Ovary (tissue), 10 donors: ENCODE measurements at regions of chr1 and their contacts with region 1.

Region 1: DNA sequence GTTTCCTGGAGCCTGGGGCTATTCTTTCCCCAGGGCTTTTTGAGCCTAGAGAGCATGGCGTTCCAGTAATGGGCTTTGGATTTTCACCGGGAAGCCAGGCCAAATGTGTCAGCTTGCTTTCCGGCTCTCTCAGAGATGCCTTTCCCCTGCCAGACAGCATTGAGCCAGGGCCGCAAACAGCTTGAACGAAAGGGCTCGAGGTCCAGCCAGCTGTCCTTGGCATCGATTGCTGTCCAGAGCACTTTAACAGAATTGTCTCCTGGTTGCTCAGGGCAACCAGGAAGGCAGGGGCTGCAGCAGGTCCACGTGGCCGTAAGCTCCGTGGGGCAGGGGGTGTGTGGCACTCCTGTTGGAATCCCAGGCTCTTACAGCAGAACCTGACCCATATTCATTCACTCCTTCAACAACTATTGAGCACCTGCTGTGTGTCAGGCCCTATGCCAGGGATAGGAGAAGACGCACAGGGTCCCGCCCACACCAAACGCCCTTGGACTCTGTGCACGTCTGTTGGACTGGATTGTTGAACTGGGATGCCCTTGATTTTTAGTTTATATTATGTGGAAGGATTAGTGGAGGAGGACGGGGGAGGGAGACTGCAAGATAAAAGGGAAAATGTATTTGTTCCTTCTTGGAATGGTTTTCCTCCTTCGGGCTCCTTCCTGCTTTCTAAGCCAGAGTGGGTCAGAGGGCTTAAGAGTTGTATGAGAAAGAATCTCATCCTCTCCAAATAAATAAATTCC is 38.7 kb upstream of the EFHD2 start:
- DNase-seq: peak; percentile 84 to 90 (median 86)
- H3K4me3 ChIP-seq: no peak overlapping the region
- H3K27ac ChIP-seq: peak overlapping the region in 1 of 2 donors; percentile 75
- H3K4me1 ChIP-seq: peaks cover 13% of the 10 kb centered on the region
- H3K27me3 ChIP-seq: no peaks in the 10 kb centered on the region
- CTCF ChIP-seq: no peak
- EP300 ChIP-seq: no peak
- POLR2A ChIP-seq: no peak

Region 2: DNA sequence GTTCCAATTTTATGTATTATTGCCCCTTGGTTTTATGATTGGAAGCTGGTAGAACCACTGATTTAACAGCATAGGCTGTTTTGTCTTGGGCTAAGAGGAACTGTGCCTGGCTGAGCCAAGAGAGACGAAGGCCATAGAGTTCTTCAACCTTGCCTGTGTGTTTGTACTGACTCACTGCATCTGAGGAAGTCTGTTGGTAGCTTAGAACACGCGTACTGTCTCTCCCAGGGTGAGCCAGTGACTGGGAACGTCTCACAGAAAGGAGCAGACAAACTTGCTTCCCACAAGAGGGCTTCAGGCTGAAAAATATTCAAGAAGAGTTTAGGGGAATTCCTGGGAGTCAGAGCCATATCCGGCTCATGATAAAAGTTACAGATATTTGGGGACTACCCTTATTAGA is 202.5 kb before region 1 on chr1:
- intact Hi-C with region 1: no loop called
- DNase-seq: no peak
- H3K4me3 ChIP-seq: no peak overlapping the region
- H3K27ac ChIP-seq: no peak overlapping the region
- H3K4me1 ChIP-seq: no peaks in the 10 kb centered on the region
- H3K27me3 ChIP-seq: no peaks in the 10 kb centered on the region
- CTCF ChIP-seq: no peak
- EP300 ChIP-seq: no peak
- POLR2A ChIP-seq: no peak

Region 3: DNA sequence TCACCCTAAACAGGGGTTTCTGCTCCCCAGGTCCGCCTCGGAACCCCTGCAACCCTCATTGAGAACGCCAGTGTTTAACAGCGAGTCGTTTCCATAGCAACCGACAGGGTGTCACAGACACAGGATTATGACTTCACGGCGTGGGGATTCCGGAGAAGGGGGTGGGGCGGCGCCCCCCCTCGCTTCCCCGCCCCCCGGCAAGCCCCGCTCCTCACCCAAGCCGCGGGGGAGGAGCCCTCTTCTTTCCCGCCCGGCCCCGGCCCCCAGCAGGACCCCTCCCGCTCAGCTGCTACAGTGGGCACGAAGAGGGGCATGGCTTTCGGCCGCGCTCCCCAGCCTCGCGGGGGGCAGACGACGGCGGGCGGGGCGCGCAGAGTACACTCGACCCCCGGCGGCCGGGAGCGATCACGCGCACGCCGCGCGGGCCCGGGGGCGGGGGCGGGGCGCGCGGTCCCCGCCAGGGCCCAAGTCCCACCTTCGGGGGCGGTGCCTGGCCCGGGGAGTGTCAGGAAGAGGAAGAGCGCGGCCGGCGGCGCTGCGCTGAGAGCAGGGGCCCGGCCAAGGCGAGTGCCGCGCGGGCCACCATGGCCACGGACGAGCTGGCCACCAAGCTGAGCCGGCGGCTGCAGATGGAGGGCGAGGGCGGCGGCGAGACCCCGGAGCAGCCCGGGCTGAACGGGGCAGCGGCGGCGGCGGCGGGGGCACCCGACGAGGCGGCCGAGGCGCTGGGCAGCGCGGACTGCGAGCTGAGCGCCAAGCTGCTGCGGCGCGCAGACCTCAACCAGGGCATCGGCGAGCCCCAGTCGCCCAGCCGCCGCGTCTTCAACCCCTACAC is 38.7 kb after region 1 on chr1 and contains the start of gene EFHD2:
- intact Hi-C with region 1: loop called in 1 of 4 experiments (anchors 2 kb)
- DNase-seq: peak; percentile 83 to 88 (median 85)
- H3K4me3 ChIP-seq: peak within 1 kb of the TSS; percentile 74
- H3K27ac ChIP-seq: peak within 1 kb of the TSS; percentile 32 to 55
- H3K4me1 ChIP-seq: peaks cover 10% of the 10 kb centered on the region
- H3K27me3 ChIP-seq: no peaks in the 10 kb centered on the region
- CTCF ChIP-seq: peak in 1 of 3 donors; percentile 19
- EP300 ChIP-seq: no peak
- POLR2A ChIP-seq: peak; percentile 74
- total RNA-seq, gene EFHD2: 24.2 to 63.2 (median 30.3) TPM